Activated naive CD4-positive, alpha-beta T cell treated with anti-CD3 and anti-CD28 coated beads for 36 hours (primary cell): ENCODE measurements at regions of chr4 and their contacts with region 1.

Region 1: GRCh38 chr4:77095101-77095821 is 19.5 kb upstream of the CCNI start:
- DNase-seq: peak; percentile 87
- H3K4me3 Mint-ChIP-seq: no peak overlapping the region
- H3K27ac Mint-ChIP-seq: no peak overlapping the region
- H3K4me1 Mint-ChIP-seq: peaks cover 6% of the 10 kb centered on the region
- H3K27me3 Mint-ChIP-seq: no peaks in the 10 kb centered on the region

Region 2: GRCh38 chr4:77082886-77083608 is 12.2 kb before region 1 on chr4:
- CTCF ChIA-PET with region 1: interaction called, 18 read pairs
- intact Hi-C with region 1: no loop called
- DNase-seq: no peak
- H3K4me3 Mint-ChIP-seq: no peak overlapping the region
- H3K27ac Mint-ChIP-seq: no peak overlapping the region
- H3K4me1 Mint-ChIP-seq: peaks cover 21% of the 10 kb centered on the region
- H3K27me3 Mint-ChIP-seq: no peaks in the 10 kb centered on the region

Region 3: DNA sequence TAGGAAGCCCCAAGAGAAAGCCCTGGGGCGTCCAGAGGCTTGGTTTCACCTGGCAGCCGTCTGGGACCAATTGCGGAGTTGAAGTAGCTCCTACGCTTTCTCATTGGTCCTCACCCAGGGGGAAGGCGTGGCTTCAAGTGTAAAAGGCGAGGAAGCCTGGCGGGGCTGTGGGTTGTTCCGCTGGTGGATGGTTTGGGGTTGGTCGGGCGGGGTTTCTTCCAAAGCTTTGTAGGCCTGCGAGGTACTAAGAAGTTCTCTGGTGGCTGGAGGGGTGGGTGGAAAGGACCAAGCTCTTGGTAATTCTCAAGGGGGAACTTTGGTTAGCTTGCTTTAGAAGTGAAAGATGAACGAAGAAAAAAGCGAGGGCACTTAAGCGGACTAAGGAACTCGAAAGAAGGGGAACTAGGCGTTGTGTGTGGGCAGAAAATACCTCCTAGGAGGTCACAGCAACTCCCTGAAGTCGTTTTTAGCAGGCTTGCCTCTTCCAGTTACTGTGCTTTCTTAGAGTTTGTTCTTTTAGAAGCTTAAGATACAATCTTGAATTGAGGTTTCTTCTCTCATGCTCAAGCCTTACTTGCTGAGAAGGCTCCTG is 98.3 kb after region 1 on chr4:
- CTCF ChIA-PET with region 1: interaction called, 214 read pairs
- intact Hi-C with region 1: loop called (anchors 2 kb)
- DNase-seq: peak; percentile 83
- H3K4me3 Mint-ChIP-seq: peak overlapping the region; percentile 85
- H3K27ac Mint-ChIP-seq: peak overlapping the region; percentile 59
- H3K4me1 Mint-ChIP-seq: peaks cover 13% of the 10 kb centered on the region
- H3K27me3 Mint-ChIP-seq: no peaks in the 10 kb centered on the region

Region 4: DNA sequence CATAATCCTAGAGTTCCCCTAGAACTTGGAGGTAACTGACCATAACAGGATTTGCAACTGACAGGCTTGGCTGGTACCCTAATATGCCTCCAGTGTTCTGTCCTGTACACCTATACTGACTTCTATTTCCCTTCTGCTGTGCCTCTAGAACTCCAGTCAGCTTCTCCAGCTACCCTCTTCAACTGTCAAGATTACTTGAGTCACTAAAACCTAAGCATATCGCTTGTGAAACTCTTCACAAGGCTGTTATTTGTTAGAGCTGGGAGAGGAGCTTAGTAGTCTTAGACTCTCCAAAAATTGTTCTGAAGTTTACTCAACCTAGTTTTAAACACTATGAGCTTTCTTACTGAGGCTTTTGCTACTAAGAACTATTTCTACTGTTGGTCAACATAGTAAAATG is 113.8 kb after region 1 on chr4:
- CTCF ChIA-PET with region 1: interaction called, 214 read pairs
- intact Hi-C with region 1: no loop called
- DNase-seq: no peak
- H3K4me3 Mint-ChIP-seq: no peak overlapping the region
- H3K27ac Mint-ChIP-seq: no peak overlapping the region
- H3K4me1 Mint-ChIP-seq: no peaks in the 10 kb centered on the region
- H3K27me3 Mint-ChIP-seq: no peaks in the 10 kb centered on the region

Region 5: GRCh38 chr4:77308843-77309242 is 213.6 kb after region 1 on chr4:
- CTCF ChIA-PET with region 1: interaction called, 4 read pairs
- intact Hi-C with region 1: loop called (anchors 1 kb)
- DNase-seq: no peak
- H3K4me3 Mint-ChIP-seq: no peak overlapping the region
- H3K27ac Mint-ChIP-seq: no peak overlapping the region
- H3K4me1 Mint-ChIP-seq: no peaks in the 10 kb centered on the region
- H3K27me3 Mint-ChIP-seq: peaks cover 5% of the 10 kb centered on the region

Region 6: GRCh38 chr4:77358315-77358928 is 263.2 kb after region 1 on chr4:
- CTCF ChIA-PET with region 1: interaction called, 4 read pairs
- intact Hi-C with region 1: loop called (anchors 1 kb)
- DNase-seq: peak; percentile 23
- H3K4me3 Mint-ChIP-seq: no peak overlapping the region
- H3K27ac Mint-ChIP-seq: no peak overlapping the region
- H3K4me1 Mint-ChIP-seq: no peaks in the 10 kb centered on the region
- H3K27me3 Mint-ChIP-seq: no peaks in the 10 kb centered on the region